Dendritic cell treated with granulocyte-macrophage colony-stimulating factor and Interleukin-4, amounts not matched to agents 40 ng/mL and 50 ng/mL, for 4 days (primary cell): ENCODE measurements at regions of chr7 and their contacts with region 1.

Region 1: DNA sequence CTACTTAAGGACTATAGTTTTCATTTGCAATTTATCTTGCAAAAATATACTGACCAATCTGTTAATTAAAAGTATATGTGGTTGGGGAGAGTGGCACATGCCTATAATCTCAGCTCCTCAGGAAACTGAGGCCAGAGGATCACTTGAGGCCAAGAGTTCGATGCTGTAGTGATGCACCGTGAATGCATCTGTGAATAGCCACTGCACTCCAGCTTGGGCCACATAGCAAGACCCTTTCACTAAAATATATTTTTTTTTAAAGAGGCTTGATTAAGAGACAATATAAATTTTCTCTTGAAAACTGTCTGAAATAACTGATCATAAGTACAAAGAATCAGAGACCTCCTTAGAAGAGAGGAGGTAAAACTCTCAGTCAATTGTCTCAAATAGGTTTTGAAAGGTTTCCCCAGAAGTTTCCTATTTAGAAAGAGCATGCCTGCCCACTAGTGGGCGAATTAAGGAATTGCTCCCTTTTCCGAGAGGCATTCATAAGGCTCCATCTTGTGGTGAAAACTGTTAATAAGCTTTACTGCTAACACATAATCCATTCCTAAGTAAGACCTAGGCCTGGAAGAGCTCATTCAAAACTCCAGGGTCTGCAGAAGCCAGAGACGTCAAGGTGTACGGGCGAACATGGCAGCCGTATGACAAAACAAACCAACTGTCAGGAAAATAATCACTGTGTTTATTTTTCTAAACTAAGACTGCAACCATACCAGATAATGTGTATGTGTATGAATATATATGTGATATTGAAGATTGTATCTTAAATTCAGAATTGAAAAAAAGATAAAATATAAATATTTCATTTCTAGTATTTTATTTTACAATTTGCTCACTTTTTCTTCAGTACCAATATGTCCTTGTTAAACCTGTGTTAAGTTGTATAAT is 6.8 kb upstream of the TAS2R40 start:
- H3K4me3 Mint-ChIP-seq: no peak overlapping the region
- H3K27ac Mint-ChIP-seq: no peak overlapping the region
- H3K4me1 Mint-ChIP-seq: peaks cover 17% of the 10 kb centered on the region
- H3K27me3 Mint-ChIP-seq: no peaks in the 10 kb centered on the region

Region 2: GRCh38 chr7:142853739-142854371 is 361.2 kb before region 1 on chr7:
- intact Hi-C with region 1: loop called (anchors 10 kb)
- H3K4me3 Mint-ChIP-seq: peak overlapping the region; percentile 84
- H3K27ac Mint-ChIP-seq: peak overlapping the region; percentile 88
- H3K4me1 Mint-ChIP-seq: peaks cover 28% of the 10 kb centered on the region
- H3K27me3 Mint-ChIP-seq: peaks cover 8% of the 10 kb centered on the region

Region 3: GRCh38 chr7:143008007-143008901 is 206.8 kb before region 1 on chr7:
- intact Hi-C with region 1: loop called (anchors 1 kb)
- H3K4me3 Mint-ChIP-seq: no peak overlapping the region
- H3K27ac Mint-ChIP-seq: no peak overlapping the region
- H3K4me1 Mint-ChIP-seq: peaks cover 13% of the 10 kb centered on the region
- H3K27me3 Mint-ChIP-seq: no peaks in the 10 kb centered on the region